Right ventricle myocardium superior (tissue), 1 donor: ENCODE measurements at regions of chr13 and their contacts with region 1.

Region 1: DNA sequence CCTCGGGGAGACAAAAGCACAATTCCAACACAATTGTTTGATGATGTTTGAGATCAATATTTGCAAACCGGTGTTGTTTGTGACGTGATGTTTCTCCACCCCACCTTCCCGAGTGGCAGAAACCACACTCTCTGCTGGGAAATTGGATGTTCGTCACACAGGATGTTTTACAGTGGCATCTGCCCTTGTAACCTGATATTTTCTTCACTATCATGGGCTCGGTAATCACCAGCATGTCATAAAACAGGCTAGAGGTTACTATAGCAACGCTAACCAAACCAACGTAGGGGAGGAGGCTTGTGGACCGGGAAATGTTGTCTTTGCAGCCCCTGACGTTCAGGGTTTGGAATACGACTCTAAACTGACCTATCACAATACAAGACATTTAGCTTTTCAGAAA is 454.5 kb downstream of the IRS2 start:
- DNase-seq: no peak
- ATAC-seq: no peak

Region 2: GRCh38 chr13:109145631-109146030 is 186.3 kb before region 1 on chr13:
- intact Hi-C with region 1: loop called (anchors 5 kb)
- DNase-seq: no peak
- ATAC-seq: peak; percentile 89